ENCODE measurements at regions of chr16 and their contacts with region 1.

Region 1: GRCh38 chr16:28277537-28278388 is 14.6 kb upstream of the SBK1 start:
- DNase-seq: peak; percentile 89
- ATAC-seq: peak; percentile 95 to 96

Region 2: DNA sequence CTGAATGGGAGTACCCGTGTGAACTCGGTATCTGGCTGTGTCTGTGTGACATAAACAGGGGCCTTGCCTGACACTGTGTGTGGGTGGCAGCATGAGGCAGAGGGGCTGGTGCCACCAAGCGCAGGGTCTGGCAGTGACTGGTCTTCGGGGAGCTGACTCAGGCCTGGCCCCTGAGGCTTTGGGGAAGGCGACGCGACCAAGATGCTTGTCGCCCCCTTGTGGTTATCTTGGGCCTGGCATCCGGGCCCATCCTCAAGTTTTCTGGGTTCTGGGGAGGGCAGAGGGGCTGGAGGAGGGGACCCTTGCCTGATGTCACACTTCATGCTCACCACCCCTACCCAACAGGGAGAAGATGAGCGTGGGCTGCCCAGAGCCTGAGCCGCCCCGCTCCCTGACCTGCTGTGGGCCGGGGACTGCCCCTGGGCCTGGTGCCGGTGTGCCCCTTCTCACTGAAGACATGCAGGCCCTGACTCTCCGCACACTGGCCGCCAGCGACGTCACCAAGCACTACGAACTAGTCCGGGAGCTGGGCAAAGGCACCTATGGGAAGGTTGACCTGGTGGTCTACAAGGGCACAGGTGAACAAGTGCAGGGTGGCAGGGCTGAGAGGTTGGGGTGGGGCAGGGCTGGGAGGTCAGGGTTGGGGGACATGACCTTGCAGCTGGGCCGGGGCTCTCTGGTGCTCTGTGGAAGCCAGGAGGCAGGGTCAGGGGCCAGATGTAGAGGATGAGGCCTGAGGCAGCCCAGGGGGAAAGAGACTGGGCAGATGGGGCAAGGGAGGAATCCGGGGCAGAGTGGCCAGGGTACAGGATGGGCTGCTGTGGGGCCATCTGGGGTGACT is 39.5 kb after region 1 on chr16:
- intact Hi-C with region 1: loop called in 1 of 2 experiments (anchors 2 kb)
- DNase-seq: peak; percentile 53
- ATAC-seq: peak; percentile 40 to 65

Region 3: DNA sequence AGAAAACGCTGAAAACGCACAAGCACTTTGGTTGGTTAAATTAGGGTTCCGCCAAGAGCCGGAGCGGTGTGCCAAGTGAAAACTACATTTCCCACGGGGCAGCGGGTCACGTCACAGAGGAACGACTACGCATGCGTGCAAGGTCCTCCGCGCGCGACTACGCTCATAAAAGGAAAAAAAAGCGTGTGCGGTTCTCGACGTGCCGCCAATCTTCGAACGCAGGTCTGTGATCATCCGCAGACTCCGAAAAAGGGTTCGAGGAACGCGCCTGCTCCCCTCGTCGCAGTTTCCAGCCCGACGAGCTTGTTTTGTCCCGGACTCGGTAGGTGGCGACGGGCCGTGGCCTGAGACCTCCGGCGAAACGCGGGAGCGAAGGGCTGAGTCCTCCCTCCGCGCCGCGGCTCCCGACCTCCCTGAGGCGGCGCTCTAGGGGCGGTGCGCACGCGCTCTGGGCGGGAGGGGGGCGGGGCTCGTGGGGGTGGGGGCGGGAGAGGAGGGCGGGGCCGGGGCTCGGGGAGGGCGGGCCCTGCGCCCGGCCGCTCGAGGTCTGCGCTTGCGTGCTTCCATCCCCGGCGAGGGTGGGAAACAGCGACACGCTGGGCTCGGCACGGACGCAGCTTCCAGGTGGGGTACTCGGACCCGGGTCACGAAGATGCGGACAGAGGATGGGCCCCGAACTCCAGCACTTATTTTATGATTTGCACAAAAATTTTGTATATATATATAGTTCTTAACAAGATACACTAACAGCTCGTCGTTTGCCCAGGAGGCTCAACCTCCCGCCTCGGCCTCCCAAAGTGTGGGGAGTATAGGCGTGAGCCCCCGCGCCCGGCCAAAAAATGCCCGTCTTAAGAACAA is 276.2 kb after region 1 on chr16 and contains the start of gene SGF29:
- intact Hi-C with region 1: no loop called
- DNase-seq: peak; percentile 94
- ATAC-seq: peak; percentile 97 to 98
- total RNA-seq, gene SGF29: 14.5 to 15.8 TPM